Aorta (tissue), 5 donors: ENCODE measurements at regions of chr2 and their contacts with region 1.

Region 1: DNA sequence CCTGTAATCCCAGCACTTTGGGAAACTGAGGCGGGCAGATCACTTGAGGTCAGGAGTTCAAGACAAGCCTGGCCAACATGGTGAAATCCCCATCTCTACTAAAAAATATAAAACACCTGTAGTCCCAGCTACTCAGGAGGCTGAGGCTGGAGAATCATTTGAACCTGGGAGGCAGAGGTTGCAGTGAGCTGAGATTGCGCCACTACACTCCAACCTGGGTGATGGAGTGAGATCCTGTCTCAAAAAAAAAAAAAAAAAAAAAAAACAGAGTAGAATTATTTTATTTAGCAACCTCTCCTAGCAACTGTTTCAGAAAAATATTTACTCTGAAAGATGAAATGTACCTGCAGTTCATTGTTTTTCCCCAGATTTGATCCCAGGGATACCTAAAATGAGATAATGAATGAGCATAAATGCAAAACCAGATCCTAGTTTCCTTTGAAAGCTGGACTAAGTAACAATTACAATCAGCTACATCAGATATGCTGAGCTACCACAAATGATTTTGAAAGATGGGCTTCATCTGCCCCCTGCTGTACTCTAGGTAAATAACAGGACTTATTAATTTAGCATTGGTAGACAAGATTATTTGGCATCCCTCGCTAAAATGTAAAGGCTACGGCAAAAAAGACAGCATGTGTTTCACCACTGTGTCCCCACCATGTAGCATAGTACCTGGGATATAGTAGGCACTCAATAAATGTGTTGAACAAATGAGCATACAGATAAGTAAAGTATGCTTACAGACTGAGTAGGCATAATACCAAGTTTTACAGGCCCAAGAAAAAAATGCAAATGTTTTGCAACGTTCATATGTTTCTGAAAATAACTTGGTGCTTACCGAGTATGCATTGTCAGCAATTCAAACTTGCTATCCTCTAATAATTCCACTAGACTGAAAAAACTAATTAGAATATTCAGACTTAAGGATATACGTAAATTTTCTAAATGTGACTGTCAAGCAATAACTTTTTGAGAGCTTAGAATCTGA is 102.5 kb downstream of the ATL2 start:
- DNase-seq: no peak
- ATAC-seq: peak; percentile 89
- H3K4me3 ChIP-seq: no peak overlapping the region
- H3K27ac ChIP-seq: no peak overlapping the region
- H3K4me1 ChIP-seq: no peaks in the 10 kb centered on the region
- H3K27me3 ChIP-seq: no peaks in the 10 kb centered on the region

Region 2: GRCh38 chr2:37982147-37982582 is 292.4 kb before region 1 on chr2:
- intact Hi-C with region 1: loop called (anchors 1 to 2 kb)
- DNase-seq: peak; percentile 76 to 87
- ATAC-seq: peak; percentile 74
- H3K4me3 ChIP-seq: peak overlapping the region; percentile 11 to 41
- H3K27ac ChIP-seq: no peak overlapping the region
- H3K4me1 ChIP-seq: no peaks in the 10 kb centered on the region
- H3K27me3 ChIP-seq: no peaks in the 10 kb centered on the region

Region 3: GRCh38 chr2:37993143-37993542 is 281.4 kb before region 1 on chr2:
- intact Hi-C with region 1: no loop called
- DNase-seq: no peak
- ATAC-seq: no peak
- H3K4me3 ChIP-seq: no peak overlapping the region
- H3K27ac ChIP-seq: no peak overlapping the region
- H3K4me1 ChIP-seq: no peaks in the 10 kb centered on the region
- H3K27me3 ChIP-seq: no peaks in the 10 kb centered on the region

Region 4: GRCh38 chr2:38076606-38077430 is 197.8 kb before region 1 on chr2:
- intact Hi-C with region 1: loop called (anchors 5 kb)
- DNase-seq: peak; percentile 88 to 92
- ATAC-seq: peak; percentile 84
- H3K4me3 ChIP-seq: peak overlapping the region; percentile 20 to 66
- H3K27ac ChIP-seq: no peak overlapping the region
- H3K4me1 ChIP-seq: no peaks in the 10 kb centered on the region
- H3K27me3 ChIP-seq: no peaks in the 10 kb centered on the region

Region 5: DNA sequence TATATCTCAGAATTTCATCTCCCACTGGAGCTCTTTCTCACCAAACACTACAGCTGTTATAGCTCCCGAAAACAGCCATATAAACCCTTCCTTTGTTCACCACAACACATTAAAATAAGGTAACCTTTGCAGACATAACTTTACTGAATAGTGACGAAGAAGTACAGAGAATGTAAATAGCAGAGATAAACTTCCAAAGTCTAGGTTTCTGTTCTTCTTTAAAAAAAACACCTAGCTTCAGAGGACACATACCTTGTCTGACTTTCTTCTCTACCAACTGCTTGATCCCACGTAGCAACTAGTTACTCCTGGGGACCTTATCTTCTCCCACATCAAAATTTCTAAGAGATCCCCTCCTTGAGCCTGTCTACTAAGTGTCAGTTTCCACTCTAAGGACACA is 70.2 kb after region 1 on chr2:
- intact Hi-C with region 1: no loop called
- DNase-seq: no peak
- ATAC-seq: no peak
- H3K4me3 ChIP-seq: no peak overlapping the region
- H3K27ac ChIP-seq: no peak overlapping the region
- H3K4me1 ChIP-seq: no peaks in the 10 kb centered on the region
- H3K27me3 ChIP-seq: no peaks in the 10 kb centered on the region